Endothelial cell of umbilical vein (primary cell): ENCODE measurements at regions of chr4 and their contacts with region 1.

Region 1: DNA sequence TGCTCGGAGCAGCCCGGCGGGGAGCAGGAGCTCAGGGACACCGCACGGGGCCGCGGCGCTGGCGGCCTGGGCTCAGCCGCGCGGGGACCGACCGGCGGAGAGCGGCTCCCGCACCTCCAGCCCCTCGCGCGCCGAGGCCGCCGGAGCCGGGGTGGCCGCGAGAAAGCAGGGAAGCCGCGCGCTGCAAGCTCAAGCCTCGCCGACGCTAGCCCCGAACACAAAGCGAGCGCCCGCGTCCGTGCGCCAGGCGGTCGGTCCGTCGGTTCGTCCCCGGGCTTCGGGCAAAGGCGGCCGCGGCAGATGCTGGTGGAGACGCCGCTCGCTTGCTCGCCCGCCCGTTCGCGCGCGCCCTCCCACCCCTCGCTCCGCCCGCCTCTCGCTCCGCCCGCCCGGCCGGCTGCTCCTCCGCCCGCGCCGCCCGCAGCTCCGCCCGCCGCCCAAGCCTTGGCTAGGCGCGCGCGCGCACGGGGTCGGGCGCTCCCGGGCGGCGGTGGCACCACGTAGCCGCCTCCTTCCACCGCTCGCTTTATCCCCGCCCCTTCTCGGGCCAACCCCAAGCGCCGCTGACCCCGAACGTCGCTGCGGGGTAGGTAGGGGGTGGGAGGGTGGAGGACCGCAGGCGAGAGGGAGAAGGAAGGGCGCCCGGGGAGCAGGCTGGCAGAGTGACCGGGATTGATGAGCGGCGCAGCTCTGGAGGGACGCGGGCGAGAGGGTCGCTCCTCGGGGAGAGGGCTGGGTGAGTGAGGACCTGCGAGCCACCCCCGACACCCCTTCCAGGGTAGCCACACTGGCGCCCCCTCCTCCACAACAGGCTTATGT is at the start of gene TSPAN5:
- DNase-seq: peak; percentile 82
- H3K4me3 ChIP-seq: peak within 1 kb of the TSS; percentile 90 to 97 (median 95)
- H3K27ac ChIP-seq: peak within 1 kb of the TSS; percentile 94
- H3K4me1 ChIP-seq: peaks cover 61% of the 10 kb centered on the region
- H3K27me3 ChIP-seq: no peaks in the 10 kb centered on the region
- CTCF ChIP-seq: no peak
- POLR2A ChIP-seq: peak; percentile 37
- total RNA-seq, gene TSPAN5: 37.6 and 45.1 TPM in 2 replicates

Region 2: DNA sequence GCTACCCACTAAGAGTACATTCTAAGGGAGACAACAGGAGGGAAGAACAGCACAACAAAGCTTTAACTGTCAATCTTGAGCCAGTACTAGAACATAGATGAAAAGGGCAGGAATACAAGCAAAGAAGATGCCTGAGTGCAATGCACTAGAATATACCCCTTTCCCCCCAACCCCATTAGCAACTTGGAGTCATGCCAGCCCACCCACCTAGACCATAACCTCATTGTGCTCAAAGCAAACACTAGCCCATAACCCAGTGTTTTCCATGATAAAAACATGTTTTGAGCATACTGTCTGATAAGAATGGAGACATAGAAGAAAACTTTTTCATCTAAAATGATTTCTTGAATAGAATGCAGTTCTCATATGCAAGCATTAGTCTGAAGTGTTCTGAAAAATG is 214.1 kb before region 1 on chr4:
- CTCF ChIA-PET with region 1: no interaction called
- POLR2A ChIA-PET with region 1: no interaction called
- dilution Hi-C with region 1: no loop called
- intact Hi-C with region 1: no loop called
- DNase-seq: no peak
- H3K4me3 ChIP-seq: no peak overlapping the region
- H3K27ac ChIP-seq: no peak overlapping the region
- H3K4me1 ChIP-seq: no peaks in the 10 kb centered on the region
- H3K27me3 ChIP-seq: no peaks in the 10 kb centered on the region
- CTCF ChIP-seq: no peak
- POLR2A ChIP-seq: no peak

Region 3: DNA sequence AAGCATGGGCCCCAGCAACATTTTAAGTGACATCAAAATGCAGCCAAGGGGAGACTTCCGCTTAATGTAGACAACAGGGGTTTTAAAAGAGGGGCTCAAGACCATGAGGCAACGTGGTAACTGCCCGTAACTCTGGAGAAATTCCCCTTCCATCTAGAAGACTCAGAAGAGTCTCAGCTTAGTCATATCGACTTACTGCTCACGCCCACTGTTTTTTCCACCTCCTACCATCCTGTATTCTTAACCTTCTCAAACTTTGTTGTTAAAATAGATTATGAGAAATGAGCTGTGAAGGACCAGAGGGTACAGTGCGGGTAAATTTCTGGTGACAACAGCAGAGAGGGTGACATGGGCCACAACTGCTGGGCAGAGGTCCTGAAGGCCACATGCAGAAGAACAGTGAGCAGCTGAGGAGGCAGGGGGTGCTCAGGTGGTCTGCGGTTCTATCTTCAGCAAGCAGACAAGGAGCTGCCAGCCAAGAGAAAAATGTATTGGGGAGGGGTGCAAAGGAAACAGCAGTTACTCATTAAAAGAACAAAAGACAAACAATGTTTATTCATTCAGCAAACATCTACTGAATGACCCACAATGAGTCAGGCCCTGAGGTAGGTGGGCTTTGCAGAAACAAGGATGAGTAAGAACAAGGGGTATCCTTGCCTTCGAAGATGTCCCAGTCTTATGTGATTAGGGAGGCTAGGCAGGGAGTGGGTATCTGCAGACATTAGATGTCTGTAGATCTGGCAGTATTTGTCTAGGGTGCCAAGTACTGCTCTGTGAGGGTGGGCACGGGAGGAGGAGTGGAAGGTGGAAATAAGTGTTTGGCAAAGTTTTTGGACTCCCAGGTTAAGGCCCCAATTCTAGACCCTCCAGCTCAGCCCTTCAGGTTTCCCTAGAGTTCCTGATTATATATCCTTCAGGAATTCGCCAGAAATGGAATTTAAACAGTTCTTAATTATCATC is 175.4 kb before region 1 on chr4:
- CTCF ChIA-PET with region 1: no interaction called
- POLR2A ChIA-PET with region 1: no interaction called
- dilution Hi-C with region 1: no loop called
- intact Hi-C with region 1: loop called (anchors 1 kb)
- DNase-seq: peak; percentile 51
- H3K4me3 ChIP-seq: no peak overlapping the region
- H3K27ac ChIP-seq: peak overlapping the region; percentile 65
- H3K4me1 ChIP-seq: peaks cover 22% of the 10 kb centered on the region
- H3K27me3 ChIP-seq: no peaks in the 10 kb centered on the region
- CTCF ChIP-seq: no peak
- POLR2A ChIP-seq: no peak

Region 4: DNA sequence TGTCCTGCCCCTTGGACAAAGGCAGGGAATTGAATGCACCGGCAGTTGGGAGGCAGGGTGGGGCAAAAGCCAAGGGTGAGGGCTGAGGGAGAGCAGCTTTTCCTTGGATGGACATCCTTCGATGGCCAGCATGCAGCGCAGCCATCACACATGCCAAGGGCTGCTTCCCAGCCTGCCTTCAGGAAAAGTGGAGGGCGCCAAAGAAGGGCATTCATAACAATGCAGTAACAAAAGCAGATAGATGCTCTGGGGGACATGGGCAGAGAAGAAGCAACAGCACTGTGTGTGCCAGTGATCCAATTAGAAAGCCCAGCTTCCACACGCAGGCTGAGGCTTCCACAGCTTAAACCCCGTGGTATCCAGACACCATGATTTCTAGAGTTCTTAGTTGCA is 71.5 kb before region 1 on chr4:
- CTCF ChIA-PET with region 1: no interaction called
- POLR2A ChIA-PET with region 1: no interaction called
- dilution Hi-C with region 1: no loop called
- intact Hi-C with region 1: no loop called
- DNase-seq: no peak
- H3K4me3 ChIP-seq: no peak overlapping the region
- H3K27ac ChIP-seq: no peak overlapping the region
- H3K4me1 ChIP-seq: no peaks in the 10 kb centered on the region
- H3K27me3 ChIP-seq: no peaks in the 10 kb centered on the region
- CTCF ChIP-seq: no peak
- POLR2A ChIP-seq: no peak

Region 5: DNA sequence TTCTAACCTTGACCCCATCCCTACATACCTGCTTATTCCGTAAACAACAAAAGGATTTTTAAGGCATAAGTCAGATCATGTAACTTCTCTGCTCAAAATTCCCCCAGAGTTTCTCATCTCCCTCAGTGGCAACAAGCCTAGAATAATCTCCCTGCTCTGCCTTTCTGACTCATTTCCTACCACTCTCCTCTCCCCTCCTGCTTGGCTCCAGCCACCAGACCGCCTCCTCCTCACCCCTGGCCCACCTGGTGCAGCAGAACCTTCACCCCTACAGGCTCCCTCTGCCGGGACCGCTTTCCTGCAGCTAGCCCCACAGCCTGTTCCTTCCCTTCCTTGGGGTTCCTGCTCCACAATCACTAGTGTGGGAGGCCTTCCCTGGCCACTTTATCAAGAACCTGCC is 32.1 kb before region 1 on chr4:
- CTCF ChIA-PET with region 1: interaction called, 5 read pairs
- POLR2A ChIA-PET with region 1: no interaction called
- dilution Hi-C with region 1: no loop called
- intact Hi-C with region 1: loop called (anchors 1 kb)
- DNase-seq: peak; percentile 91
- H3K4me3 ChIP-seq: peak overlapping the region in 1 of 3 experiments; percentile 0
- H3K27ac ChIP-seq: peak overlapping the region; percentile 74
- H3K4me1 ChIP-seq: peaks cover 45% of the 10 kb centered on the region
- H3K27me3 ChIP-seq: no peaks in the 10 kb centered on the region
- CTCF ChIP-seq: peak in 1 of 2 donors; percentile 4
- POLR2A ChIP-seq: peak; percentile 25

Region 6: GRCh38 chr4:98688411-98689290 is 30.2 kb after region 1 on chr4:
- CTCF ChIA-PET with region 1: interaction called, 8 read pairs
- POLR2A ChIA-PET with region 1: no interaction called
- dilution Hi-C with region 1: no loop called
- intact Hi-C with region 1: loop called (anchors 1 kb)
- DNase-seq: peak; percentile 90
- H3K4me3 ChIP-seq: peak overlapping the region in 1 of 3 experiments; percentile 34
- H3K27ac ChIP-seq: peak overlapping the region; percentile 85
- H3K4me1 ChIP-seq: peaks cover 59% of the 10 kb centered on the region
- H3K27me3 ChIP-seq: no peaks in the 10 kb centered on the region
- CTCF ChIP-seq: no peak
- POLR2A ChIP-seq: no peak

Region 7: DNA sequence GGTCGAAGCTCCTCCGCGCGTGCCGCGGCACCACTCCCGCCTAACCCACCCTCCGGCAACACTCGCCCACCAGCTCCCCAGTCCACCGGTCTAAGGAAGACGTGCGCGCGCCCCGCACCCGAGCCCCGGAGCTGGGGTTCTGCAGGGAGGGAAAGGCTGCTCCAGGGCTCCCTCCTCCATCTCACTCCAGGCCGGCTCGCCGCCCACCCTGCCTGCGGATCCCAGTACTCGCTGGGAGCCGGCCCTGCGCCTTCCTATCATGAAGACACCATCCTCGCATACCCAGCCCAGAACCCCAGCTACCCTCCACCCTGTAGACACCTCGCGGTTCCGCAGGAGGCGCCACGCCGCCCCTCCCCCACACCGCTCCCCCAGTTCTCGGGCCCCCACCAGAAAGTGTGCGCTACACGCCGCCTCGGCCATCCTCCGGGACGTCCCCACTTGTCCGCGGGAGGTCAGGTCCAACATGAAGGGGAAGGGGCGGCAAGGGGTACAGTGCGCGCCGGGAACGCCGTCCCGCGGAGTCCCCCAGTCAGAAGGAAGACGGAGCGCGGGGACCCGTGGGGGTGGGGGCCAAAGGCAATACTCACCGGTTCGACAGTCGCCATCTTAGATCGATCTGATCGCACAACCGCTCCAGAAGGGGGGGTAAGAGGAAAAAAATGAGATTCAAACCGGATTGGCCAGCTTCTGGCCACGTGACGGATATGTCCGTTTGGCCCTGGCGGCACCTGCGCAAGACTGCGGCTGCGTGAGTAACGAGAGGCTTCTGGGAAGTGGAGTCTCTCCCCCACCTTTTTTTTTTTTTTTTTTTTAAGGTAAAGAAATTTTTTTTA is 270.2 kb after region 1 on chr4 and contains the start of gene EIF4E:
- CTCF ChIA-PET with region 1: no interaction called
- POLR2A ChIA-PET with region 1: no interaction called
- dilution Hi-C with region 1: no loop called
- intact Hi-C with region 1: loop called (anchors 1 kb)
- DNase-seq: peak; percentile 99
- H3K4me3 ChIP-seq: peak within 1 kb of the TSS; percentile 91 to 95 (median 91)
- H3K27ac ChIP-seq: peak within 1 kb of the TSS; percentile 93
- H3K4me1 ChIP-seq: peaks cover 32% of the 10 kb centered on the region
- H3K27me3 ChIP-seq: no peaks in the 10 kb centered on the region
- CTCF ChIP-seq: peak in 1 of 2 donors; percentile 26
- POLR2A ChIP-seq: peak; percentile 81
- total RNA-seq, gene EIF4E: 103 and 107 TPM in 2 replicates